Head of caudate nucleus (tissue), 42 donors: ENCODE measurements at regions of chr4 and their contacts with region 1.

Region 1: DNA sequence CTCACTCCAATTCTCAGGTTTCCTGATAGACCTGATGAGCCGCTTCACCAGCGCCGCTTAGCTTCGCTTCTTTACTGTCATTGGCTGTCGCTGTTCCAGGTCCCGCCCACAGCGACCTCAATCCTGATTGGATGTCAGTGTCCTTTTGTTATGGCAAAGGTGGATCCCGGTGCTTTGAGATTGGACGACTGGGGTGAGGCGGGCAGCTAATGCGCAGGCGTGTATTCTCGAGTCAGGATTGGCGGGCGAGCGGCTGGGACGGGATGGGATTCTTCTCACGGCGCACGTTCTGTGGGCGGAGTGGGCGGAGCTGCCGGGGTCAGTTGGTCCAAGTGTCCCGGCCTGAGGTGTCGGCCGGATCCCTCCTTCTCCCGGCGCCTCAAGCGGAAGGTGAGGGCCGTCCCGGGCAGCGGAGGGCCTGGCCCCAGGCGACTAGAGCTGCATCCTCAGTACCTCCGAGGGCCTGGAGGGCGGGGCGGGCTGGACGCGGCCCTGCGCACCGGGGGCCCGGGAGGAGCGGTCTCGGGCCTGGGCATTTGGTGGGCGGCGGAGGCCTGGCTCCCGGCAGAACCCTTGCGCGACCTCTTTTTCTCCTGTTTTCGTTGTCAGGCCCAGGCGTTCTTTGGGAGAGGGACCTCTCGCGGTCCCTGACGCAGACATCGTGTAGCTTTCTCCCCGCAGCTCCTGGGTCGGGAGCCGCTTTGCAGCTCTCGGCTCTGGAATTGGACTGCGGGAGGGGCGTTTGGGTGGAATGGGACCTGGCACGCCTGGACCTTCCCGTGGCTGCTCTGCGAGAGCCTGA is at the start of gene SCOC:
- DNase-seq: peak; percentile 95 to 100 (median 99)

Region 2: DNA sequence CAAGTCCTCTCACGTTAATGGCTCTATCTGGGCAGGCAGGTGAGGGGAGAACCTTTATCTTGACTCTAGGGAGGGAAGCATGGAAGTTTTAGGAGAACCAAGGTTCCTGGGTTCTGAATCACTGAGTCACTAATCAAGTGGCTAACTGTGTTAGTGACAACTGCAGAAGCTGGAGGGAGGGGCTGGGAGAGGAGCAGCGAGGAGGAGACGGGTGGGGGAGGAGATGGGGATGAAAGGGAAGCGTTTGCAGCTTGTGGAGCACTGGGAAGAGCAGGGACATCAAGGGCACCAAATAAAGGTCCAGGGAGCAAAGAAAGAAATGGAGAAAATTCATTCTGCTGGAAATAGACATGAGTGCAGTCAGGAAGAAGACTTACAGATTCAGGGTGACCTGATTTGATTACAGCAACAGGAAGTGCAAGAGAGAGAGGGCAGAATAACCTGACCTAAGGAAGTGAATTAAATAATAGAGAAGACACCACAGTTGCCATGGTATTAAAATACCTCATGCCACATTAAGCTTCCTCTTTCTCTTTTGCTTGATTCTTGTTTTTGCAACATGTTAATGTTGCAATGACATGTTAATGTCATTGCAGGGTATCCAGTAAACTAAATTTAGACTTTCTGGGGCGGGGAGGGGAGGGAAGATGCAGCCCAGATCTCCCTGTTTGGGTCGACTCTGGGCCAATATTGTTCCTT is 813.0 kb before region 1 on chr4:
- intact Hi-C with region 1: loop called (anchors 5 kb)
- DNase-seq: peak in 4 of 42 donors; percentile 20 to 51 (median 34)

Region 3: DNA sequence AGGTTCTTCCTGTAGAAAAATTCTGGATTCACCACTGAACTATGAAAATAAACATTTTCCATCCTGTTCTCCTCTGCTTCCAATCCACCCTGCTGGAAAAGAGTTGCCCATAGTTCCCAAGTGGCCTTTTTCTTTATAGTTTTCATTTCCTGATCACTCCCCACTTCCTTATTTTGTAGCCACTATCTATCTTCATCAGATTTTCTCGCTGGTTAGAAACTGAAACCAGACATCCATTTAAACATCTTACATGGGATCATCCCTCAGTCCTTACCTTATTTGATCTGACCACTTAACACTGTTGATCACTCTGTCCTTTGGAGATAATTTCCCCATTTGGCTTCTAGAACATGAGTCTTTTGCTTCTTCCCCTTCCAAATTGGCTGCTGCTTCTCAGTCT is 42.3 kb before region 1 on chr4:
- intact Hi-C with region 1: no loop called
- DNase-seq: no peak

Region 4: GRCh38 chr4:140523857-140524742 is 150.6 kb after region 1 on chr4 and contains the start of gene ELMOD2:
- intact Hi-C with region 1: loop called (anchors 5 kb)
- DNase-seq: peak; percentile 97 to 100 (median 99)